ENCODE measurements at regions of chr21 and their contacts with region 1.

Region 1: GRCh38 chr21:29164325-29164942 is 34.0 kb downstream of the MAP3K7CL start:
- DNase-seq: peak in 1 of 2 experiments; percentile 49
- H3K4me3 ChIP-seq: no peak overlapping the region
- H3K4me3 Mint-ChIP-seq: no peak overlapping the region
- H3K27ac Mint-ChIP-seq: no peak overlapping the region
- H3K4me1 ChIP-seq: no peaks in the 10 kb centered on the region
- H3K4me1 Mint-ChIP-seq: no peaks in the 10 kb centered on the region
- H3K27me3 ChIP-seq: no peaks in the 10 kb centered on the region
- H3K27me3 Mint-ChIP-seq: no peaks in the 10 kb centered on the region
- CTCF ChIP-seq: peak; percentile 64 to 65

Region 2: GRCh38 chr21:29091032-29091431 is 73.4 kb before region 1 on chr21:
- CTCF ChIA-PET with region 1: interaction called, 9 read pairs
- POLR2A ChIA-PET with region 1: no interaction called
- intact Hi-C with region 1: loop called (anchors 5 kb)
- DNase-seq: no peak
- H3K4me3 ChIP-seq: no peak overlapping the region
- H3K4me3 Mint-ChIP-seq: no peak overlapping the region
- H3K27ac Mint-ChIP-seq: no peak overlapping the region
- H3K4me1 ChIP-seq: no peaks in the 10 kb centered on the region
- H3K4me1 Mint-ChIP-seq: peaks cover under 1% of the 10 kb centered on the region
- H3K27me3 ChIP-seq: no peaks in the 10 kb centered on the region
- H3K27me3 Mint-ChIP-seq: no peaks in the 10 kb centered on the region
- CTCF ChIP-seq: no peak

Region 3: GRCh38 chr21:29195981-29196669 is 31.7 kb after region 1 on chr21:
- CTCF ChIA-PET with region 1: interaction called, 4 read pairs
- POLR2A ChIA-PET with region 1: no interaction called
- intact Hi-C with region 1: loop called (anchors 1 kb)
- DNase-seq: peak; percentile 71 to 74
- H3K4me3 ChIP-seq: no peak overlapping the region
- H3K4me3 Mint-ChIP-seq: peak overlapping the region; percentile 76
- H3K27ac Mint-ChIP-seq: peak overlapping the region; percentile 92
- H3K4me1 ChIP-seq: peaks cover 49% of the 10 kb centered on the region
- H3K4me1 Mint-ChIP-seq: peaks cover 36% of the 10 kb centered on the region
- H3K27me3 ChIP-seq: no peaks in the 10 kb centered on the region
- H3K27me3 Mint-ChIP-seq: no peaks in the 10 kb centered on the region
- CTCF ChIP-seq: peak; percentile 23 to 31

Region 4: GRCh38 chr21:29343519-29343918 is 179.1 kb after region 1 on chr21:
- CTCF ChIA-PET with region 1: interaction called, 3 read pairs
- POLR2A ChIA-PET with region 1: no interaction called
- intact Hi-C with region 1: loop called (anchors 1 kb)
- DNase-seq: no peak
- H3K4me3 ChIP-seq: no peak overlapping the region
- H3K4me3 Mint-ChIP-seq: no peak overlapping the region
- H3K27ac Mint-ChIP-seq: no peak overlapping the region
- H3K4me1 ChIP-seq: peaks cover 18% of the 10 kb centered on the region
- H3K4me1 Mint-ChIP-seq: peaks cover 15% of the 10 kb centered on the region
- H3K27me3 ChIP-seq: no peaks in the 10 kb centered on the region
- H3K27me3 Mint-ChIP-seq: no peaks in the 10 kb centered on the region
- CTCF ChIP-seq: no peak

Region 5: DNA sequence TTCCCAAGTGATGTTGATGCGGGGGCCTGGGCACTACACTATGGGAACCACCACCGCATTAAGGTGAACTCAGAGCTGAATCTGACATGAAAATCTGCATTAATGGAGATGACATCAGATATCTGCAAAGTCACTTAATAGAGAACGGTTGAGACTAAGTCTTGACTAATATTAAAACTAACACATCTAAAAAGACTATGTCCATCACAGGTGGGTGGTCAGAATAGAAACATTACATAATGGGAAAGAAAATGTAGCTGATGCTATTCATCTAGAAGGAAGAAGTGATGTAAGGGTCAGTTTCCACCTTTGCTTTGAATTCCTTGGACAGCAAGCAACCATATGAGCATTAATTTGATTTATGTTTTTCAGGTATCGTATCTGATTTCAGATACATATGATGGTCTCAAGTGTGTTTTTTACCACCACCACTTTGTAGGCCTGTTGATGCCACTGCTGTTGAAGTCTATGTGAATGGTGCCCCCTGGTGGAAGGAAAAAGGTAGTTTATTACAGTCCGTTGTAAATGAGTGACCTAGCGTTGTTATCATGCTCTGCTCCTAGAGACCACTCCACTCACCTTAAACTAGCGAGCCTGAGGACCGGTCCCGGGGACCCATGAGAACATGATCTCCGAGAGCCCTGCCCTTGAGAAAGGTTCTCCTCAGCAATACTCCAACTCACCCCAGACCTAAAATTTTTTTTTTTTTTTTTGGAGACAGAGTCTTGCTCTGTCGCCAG is 207.8 kb after region 1 on chr21:
- CTCF ChIA-PET with region 1: interaction called, 5 read pairs
- POLR2A ChIA-PET with region 1: no interaction called
- intact Hi-C with region 1: loop called (anchors 1 kb)
- DNase-seq: peak; percentile 56 to 72
- H3K4me3 ChIP-seq: no peak overlapping the region
- H3K4me3 Mint-ChIP-seq: no peak overlapping the region
- H3K27ac Mint-ChIP-seq: no peak overlapping the region
- H3K4me1 ChIP-seq: no peaks in the 10 kb centered on the region
- H3K4me1 Mint-ChIP-seq: no peaks in the 10 kb centered on the region
- H3K27me3 ChIP-seq: no peaks in the 10 kb centered on the region
- H3K27me3 Mint-ChIP-seq: no peaks in the 10 kb centered on the region
- CTCF ChIP-seq: peak; percentile 45 to 58

Region 6: DNA sequence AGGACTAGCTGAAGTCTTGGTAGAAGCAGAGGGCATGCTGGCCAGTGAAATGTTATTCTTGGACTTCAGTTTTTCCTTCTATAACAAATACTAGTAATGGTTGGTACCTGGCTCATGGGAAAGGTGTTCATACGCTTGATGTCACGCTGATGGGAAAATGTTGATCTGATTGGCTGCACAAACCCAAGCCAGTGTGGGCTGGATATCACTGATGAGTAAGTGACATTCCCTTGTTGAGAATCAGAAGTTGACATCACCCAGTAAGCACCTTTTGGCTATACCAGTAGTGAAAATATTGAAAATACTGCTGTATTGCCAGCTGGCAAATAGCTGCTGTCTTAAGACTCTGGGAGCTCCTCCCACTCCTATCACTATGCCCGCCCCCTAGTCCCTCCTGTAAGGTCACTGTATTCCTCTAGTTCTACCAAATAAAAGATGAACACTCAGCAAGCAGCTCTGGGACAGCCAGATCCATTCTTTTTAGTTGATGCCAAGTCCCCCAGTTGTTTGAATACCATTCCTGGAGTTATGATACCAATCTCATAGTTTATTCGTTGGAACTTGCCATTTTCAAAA is 607.1 kb after region 1 on chr21:
- CTCF ChIA-PET with region 1: no interaction called
- POLR2A ChIA-PET with region 1: no interaction called
- intact Hi-C with region 1: no loop called
- DNase-seq: no peak
- H3K4me3 ChIP-seq: no peak overlapping the region
- H3K4me3 Mint-ChIP-seq: no peak overlapping the region
- H3K27ac Mint-ChIP-seq: no peak overlapping the region
- H3K4me1 ChIP-seq: no peaks in the 10 kb centered on the region
- H3K4me1 Mint-ChIP-seq: peaks cover 10% of the 10 kb centered on the region
- H3K27me3 ChIP-seq: no peaks in the 10 kb centered on the region
- H3K27me3 Mint-ChIP-seq: peaks cover 30% of the 10 kb centered on the region
- CTCF ChIP-seq: no peak

Region 7: GRCh38 chr21:29914326-29914725 is 749.9 kb after region 1 on chr21:
- CTCF ChIA-PET with region 1: no interaction called
- POLR2A ChIA-PET with region 1: no interaction called
- intact Hi-C with region 1: no loop called
- DNase-seq: no peak
- H3K4me3 ChIP-seq: no peak overlapping the region
- H3K4me3 Mint-ChIP-seq: no peak overlapping the region
- H3K27ac Mint-ChIP-seq: no peak overlapping the region
- H3K4me1 ChIP-seq: no peaks in the 10 kb centered on the region
- H3K4me1 Mint-ChIP-seq: no peaks in the 10 kb centered on the region
- H3K27me3 ChIP-seq: no peaks in the 10 kb centered on the region
- H3K27me3 Mint-ChIP-seq: peaks cover 4% of the 10 kb centered on the region
- CTCF ChIP-seq: no peak

Measured in Caco-2 (cell line).